ENCODE measurements at regions of chr10 and their contacts with region 1.

Region 1: GRCh38 chr10:104406715-104407650 is 53.4 kb downstream of the CFAP58 start:
- DNase-seq: no peak
- ATAC-seq: no peak
- H3K4me3 Mint-ChIP-seq: no peak overlapping the region
- H3K27ac Mint-ChIP-seq: no peak overlapping the region
- H3K4me1 Mint-ChIP-seq: no peaks in the 10 kb centered on the region
- H3K27me3 Mint-ChIP-seq: peaks cover 25% of the 10 kb centered on the region
- CTCF ChIP-seq: no peak

Region 2: GRCh38 chr10:104387130-104387888 is 19.7 kb before region 1 on chr10:
- CTCF ChIA-PET with region 1: no interaction called
- POLR2A ChIA-PET with region 1: no interaction called
- intact Hi-C with region 1: no loop called
- DNase-seq: no peak
- ATAC-seq: no peak
- H3K4me3 Mint-ChIP-seq: no peak overlapping the region
- H3K27ac Mint-ChIP-seq: no peak overlapping the region
- H3K4me1 Mint-ChIP-seq: no peaks in the 10 kb centered on the region
- H3K27me3 Mint-ChIP-seq: peaks cover 33% of the 10 kb centered on the region
- CTCF ChIP-seq: no peak

Region 3: DNA sequence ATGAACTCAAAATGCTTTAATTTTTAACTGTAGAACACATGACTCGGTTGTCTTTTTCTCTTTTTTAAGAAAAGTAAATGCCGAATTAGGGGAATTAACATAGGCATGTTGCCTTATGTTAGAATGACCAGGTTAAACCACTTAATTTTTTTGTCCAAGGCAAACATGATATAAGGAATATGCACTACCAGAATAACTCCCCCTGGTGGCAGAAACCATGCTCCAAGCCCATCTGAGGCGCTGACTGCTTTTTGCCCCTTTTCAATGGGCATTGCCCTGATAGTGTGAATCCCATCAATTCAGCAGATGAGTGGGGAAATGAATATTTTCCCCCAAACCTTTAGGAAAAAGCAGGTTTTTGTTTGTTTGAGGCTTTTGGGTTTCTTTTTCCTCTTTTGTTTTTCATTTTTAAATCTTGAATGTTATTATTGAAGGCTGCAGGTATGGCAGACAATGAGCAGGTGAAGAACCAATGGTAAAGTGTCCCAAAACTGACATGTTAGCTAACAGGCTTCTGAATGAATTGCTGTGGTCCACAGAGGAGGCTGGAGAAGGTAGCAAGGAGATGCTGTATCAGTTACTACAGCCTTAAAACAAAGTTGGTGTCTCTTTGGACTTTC is 518.4 kb after region 1 on chr10:
- CTCF ChIA-PET with region 1: no interaction called
- POLR2A ChIA-PET with region 1: no interaction called
- intact Hi-C with region 1: loop called (anchors 5 kb)
- DNase-seq: no peak
- ATAC-seq: no peak
- H3K4me3 Mint-ChIP-seq: no peak overlapping the region
- H3K27ac Mint-ChIP-seq: no peak overlapping the region
- H3K4me1 Mint-ChIP-seq: peaks cover 2% of the 10 kb centered on the region
- H3K27me3 Mint-ChIP-seq: peaks cover 2% of the 10 kb centered on the region
- CTCF ChIP-seq: no peak